Colonic mucosa (tissue), 4 donors: ENCODE measurements at regions of chr2 and their contacts with region 1.

Region 1: GRCh38 chr2:240991373-240992263 is 6.8 kb upstream of the SNED1 start:
- DNase-seq: peak; percentile 63
- H3K4me3 ChIP-seq: no peak overlapping the region
- H3K27ac ChIP-seq: peak overlapping the region; percentile 13
- H3K4me1 ChIP-seq: peaks cover 17% of the 10 kb centered on the region
- H3K27me3 ChIP-seq: no peaks in the 10 kb centered on the region
- CTCF ChIP-seq: no peak

Region 2: DNA sequence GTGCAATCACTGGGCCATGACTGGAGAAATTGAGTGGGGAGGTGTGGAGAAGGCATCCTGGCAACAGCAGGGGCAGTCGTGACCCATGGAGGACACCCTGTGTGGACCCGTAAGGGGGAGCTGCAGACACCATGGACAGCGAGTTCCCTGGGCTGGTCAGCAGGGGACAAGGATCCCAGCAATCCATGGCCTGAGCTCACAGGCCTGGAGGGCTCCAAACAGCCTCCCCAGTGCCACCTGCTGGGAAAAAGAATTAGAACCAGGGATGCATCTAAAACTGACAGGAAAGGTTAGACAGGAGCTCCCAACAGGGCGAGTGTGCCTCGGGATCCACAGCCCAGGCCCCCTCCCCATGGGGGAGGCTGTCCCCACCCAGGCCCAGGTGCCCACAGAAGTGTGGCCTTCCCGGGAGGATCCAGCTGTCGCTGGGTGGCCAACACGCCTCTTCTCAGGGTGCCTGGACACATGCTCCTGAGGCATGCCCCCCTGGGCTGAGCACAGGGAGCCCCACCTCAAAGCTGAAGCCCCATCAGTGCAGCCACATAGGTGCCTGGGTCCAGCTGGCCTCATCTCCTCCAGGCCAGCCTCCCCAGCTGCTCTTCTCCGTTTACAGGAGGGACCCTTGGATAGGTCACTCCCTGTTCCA is 151.1 kb before region 1 on chr2:
- intact Hi-C with region 1: no loop called
- DNase-seq: peak; percentile 54
- H3K4me3 ChIP-seq: no peak overlapping the region
- H3K27ac ChIP-seq: no peak overlapping the region
- H3K4me1 ChIP-seq: no peaks in the 10 kb centered on the region
- H3K27me3 ChIP-seq: no peaks in the 10 kb centered on the region
- CTCF ChIP-seq: peak; percentile 45

Region 3: GRCh38 chr2:240851078-240851991 is 140.3 kb before region 1 on chr2:
- intact Hi-C with region 1: loop called (anchors 2 kb)
- DNase-seq: peak; percentile 91
- H3K4me3 ChIP-seq: no peak overlapping the region
- H3K27ac ChIP-seq: no peak overlapping the region
- H3K4me1 ChIP-seq: peaks cover 11% of the 10 kb centered on the region
- H3K27me3 ChIP-seq: no peaks in the 10 kb centered on the region
- CTCF ChIP-seq: peak; percentile 97